ENCODE measurements at regions of chr6 and their contacts with region 1.

Region 1: DNA sequence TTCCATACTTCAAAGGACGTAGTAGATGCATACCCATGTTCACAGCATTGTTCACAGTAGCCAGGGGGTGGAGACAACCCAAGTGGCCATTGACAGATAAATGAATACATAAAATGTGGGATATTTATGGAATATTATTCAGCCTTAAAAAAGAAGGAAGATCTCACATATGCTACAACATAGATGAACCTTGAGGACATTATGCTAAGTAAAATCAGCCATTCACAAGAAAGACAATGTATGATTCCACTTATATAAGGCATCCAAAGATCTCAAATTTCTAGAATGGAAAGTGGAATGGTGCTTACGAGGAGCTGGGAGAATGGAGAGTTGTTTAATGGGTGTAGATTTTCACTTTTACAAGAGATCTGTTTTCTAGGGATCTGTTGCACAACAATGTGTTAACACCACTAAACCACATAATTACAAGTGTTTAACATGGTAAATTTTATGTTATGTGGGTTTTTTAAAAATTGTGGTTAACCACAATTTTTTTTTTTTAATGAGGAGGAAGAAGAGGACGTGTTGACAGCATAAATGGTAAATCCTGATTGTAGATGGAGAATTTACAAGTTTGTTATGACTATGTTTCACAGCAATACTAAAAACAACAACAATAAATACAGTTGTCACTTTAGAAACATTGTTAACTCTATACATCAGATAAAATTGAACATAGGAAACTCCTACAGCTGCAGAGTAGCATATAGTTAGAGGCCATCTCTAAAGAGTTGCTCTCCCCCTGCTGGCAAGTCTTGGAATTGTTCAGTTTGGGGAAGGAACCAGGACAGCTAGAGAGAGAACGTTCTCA is 41.6 kb downstream of the CCN2 start:
- DNase-seq: peak; percentile 71 to 77
- ATAC-seq: peak; percentile 79
- H3K4me3 ChIP-seq: no peak overlapping the region
- H3K27ac ChIP-seq: no peak overlapping the region
- H3K4me1 ChIP-seq: no peaks in the 10 kb centered on the region
- H3K27me3 ChIP-seq: no peaks in the 10 kb centered on the region

Region 2: GRCh38 chr6:131787766-131788712 is 121.6 kb before region 1 on chr6:
- intact Hi-C with region 1: loop called in 1 of 2 experiments (anchors 5 kb)
- DNase-seq: no peak
- ATAC-seq: peak; percentile 48
- H3K4me3 ChIP-seq: no peak overlapping the region
- H3K27ac ChIP-seq: no peak overlapping the region
- H3K4me1 ChIP-seq: no peaks in the 10 kb centered on the region
- H3K27me3 ChIP-seq: no peaks in the 10 kb centered on the region

Region 3: GRCh38 chr6:131948692-131949619 is 39.3 kb after region 1 on chr6:
- intact Hi-C with region 1: no loop called
- DNase-seq: peak in 1 of 2 donors; percentile 81
- ATAC-seq: peak; percentile 15
- H3K4me3 ChIP-seq: peak overlapping the region; percentile 41 to 72
- H3K27ac ChIP-seq: peak overlapping the region; percentile 31 to 94
- H3K4me1 ChIP-seq: peaks cover 0 to 7% of the 10 kb centered on the region in 2 donors
- H3K27me3 ChIP-seq: no peaks in the 10 kb centered on the region